Activated CD8-positive, alpha-beta T cell treated with anti-CD3 and anti-CD28 coated beads for 36 hours (primary cell): ENCODE measurements at regions of chr6 and their contacts with region 1.

Region 1: DNA sequence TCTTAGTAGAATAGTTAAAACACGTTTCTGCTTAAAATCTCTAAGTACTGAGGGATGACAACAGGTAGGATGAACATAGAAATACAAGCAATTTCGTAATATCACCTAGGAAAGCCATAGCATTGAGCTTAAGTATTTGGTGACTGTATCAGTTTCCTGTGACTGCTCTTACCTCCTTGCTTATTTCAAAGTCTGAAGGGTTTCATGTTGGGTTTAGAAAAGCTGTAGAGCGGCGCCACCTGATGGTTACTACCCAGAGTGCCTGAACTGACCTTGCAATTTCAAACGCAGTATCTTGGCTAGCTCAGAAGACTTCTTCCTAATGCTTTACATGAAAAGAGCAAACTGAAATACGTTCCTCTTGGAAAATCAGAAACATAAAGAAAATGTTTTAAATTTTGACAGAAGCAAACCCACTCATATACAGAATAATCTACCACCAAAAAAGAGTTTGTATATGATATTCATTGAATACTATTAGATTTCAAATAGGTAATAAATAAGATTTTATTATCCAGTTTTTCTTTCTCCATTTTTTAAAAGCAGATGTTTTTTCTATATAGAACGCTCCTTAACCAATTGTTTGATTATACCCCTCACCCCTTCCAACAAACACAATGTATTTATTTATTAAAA is 82.3 kb upstream of the RIPOR2 start:
- DNase-seq: peak; percentile 94
- ATAC-seq: peak; percentile 80
- H3K4me3 Mint-ChIP-seq: peak overlapping the region; percentile 11
- H3K27ac Mint-ChIP-seq: peak overlapping the region; percentile 76
- H3K4me1 Mint-ChIP-seq: peaks cover 51% of the 10 kb centered on the region
- H3K27me3 Mint-ChIP-seq: no peaks in the 10 kb centered on the region
- CTCF ChIP-seq: peak; percentile 84

Region 2: GRCh38 chr6:24581084-24581669 is 436.9 kb before region 1 on chr6:
- CTCF ChIA-PET with region 1: interaction called, 6 read pairs
- POLR2A ChIA-PET with region 1: no interaction called
- intact Hi-C with region 1: loop called (anchors 5 kb)
- DNase-seq: peak; percentile 91
- ATAC-seq: peak; percentile 92
- H3K4me3 Mint-ChIP-seq: no peak overlapping the region
- H3K27ac Mint-ChIP-seq: no peak overlapping the region
- H3K4me1 Mint-ChIP-seq: peaks cover 3% of the 10 kb centered on the region
- H3K27me3 Mint-ChIP-seq: peaks cover 2% of the 10 kb centered on the region
- CTCF ChIP-seq: peak; percentile 76

Region 3: DNA sequence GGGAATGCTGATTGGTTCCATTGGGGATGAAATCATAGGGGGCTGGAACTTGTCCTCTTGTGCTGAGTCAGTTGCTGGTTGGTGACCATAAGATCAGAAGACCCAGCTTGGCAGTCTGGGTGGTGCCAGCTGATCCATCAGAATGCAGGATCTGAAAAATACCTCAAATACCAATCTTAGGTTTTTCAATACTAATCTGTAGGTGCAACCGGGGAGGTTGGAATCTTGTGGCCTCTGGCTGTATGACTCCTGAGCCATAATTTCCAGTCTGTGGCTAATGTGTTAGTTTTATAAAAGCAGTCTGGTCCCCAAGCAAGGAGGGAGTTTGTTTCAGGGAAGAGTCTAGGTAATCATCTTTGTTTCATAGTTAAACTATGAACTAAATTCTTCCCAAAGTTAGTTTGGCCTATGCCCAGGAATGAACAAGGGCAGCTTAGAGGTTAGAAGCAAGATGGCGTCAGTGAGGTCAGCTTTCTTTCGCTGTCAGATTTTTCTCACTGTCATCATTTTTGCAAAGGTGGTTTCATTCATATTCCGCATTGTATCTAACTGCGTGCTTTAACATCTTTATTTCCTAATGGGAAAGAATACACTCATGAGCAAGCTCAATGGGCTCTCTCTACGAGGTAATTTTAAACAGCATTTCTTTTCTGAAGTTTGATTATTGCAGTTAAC is 221.3 kb before region 1 on chr6:
- CTCF ChIA-PET with region 1: interaction called, 3 read pairs
- POLR2A ChIA-PET with region 1: interaction called, 3 read pairs
- intact Hi-C with region 1: loop called (anchors 5 kb)
- DNase-seq: peak; percentile 31
- ATAC-seq: peak; percentile 55
- H3K4me3 Mint-ChIP-seq: no peak overlapping the region
- H3K27ac Mint-ChIP-seq: peak overlapping the region; percentile 7
- H3K4me1 Mint-ChIP-seq: peaks cover 30% of the 10 kb centered on the region
- H3K27me3 Mint-ChIP-seq: no peaks in the 10 kb centered on the region
- CTCF ChIP-seq: no peak

Region 4: GRCh38 chr6:24864343-24864742 is 153.7 kb before region 1 on chr6:
- CTCF ChIA-PET with region 1: interaction called, 156 read pairs
- POLR2A ChIA-PET with region 1: no interaction called
- intact Hi-C with region 1: no loop called
- DNase-seq: no peak
- ATAC-seq: no peak
- H3K4me3 Mint-ChIP-seq: no peak overlapping the region
- H3K27ac Mint-ChIP-seq: peak overlapping the region; percentile 86
- H3K4me1 Mint-ChIP-seq: peaks cover 84% of the 10 kb centered on the region
- H3K27me3 Mint-ChIP-seq: no peaks in the 10 kb centered on the region
- CTCF ChIP-seq: no peak

Region 5: GRCh38 chr6:24919004-24919892 is 98.8 kb before region 1 on chr6:
- CTCF ChIA-PET with region 1: interaction called, 12 read pairs
- POLR2A ChIA-PET with region 1: no interaction called
- intact Hi-C with region 1: no loop called
- DNase-seq: peak; percentile 46
- ATAC-seq: peak; percentile 11
- H3K4me3 Mint-ChIP-seq: peak overlapping the region; percentile 69
- H3K27ac Mint-ChIP-seq: peak overlapping the region; percentile 94
- H3K4me1 Mint-ChIP-seq: peaks cover 82% of the 10 kb centered on the region
- H3K27me3 Mint-ChIP-seq: no peaks in the 10 kb centered on the region
- CTCF ChIP-seq: no peak

Region 6: GRCh38 chr6:25061289-25061936 is 43.4 kb after region 1 on chr6:
- CTCF ChIA-PET with region 1: interaction called, 12 read pairs
- POLR2A ChIA-PET with region 1: interaction called, 3 read pairs
- intact Hi-C with region 1: no loop called
- DNase-seq: no peak
- ATAC-seq: no peak
- H3K4me3 Mint-ChIP-seq: no peak overlapping the region
- H3K27ac Mint-ChIP-seq: no peak overlapping the region
- H3K4me1 Mint-ChIP-seq: peaks cover 18% of the 10 kb centered on the region
- H3K27me3 Mint-ChIP-seq: no peaks in the 10 kb centered on the region
- CTCF ChIP-seq: no peak